A549 (cell line): ENCODE measurements at regions of chr5 and their contacts with region 1.

Region 1: DNA sequence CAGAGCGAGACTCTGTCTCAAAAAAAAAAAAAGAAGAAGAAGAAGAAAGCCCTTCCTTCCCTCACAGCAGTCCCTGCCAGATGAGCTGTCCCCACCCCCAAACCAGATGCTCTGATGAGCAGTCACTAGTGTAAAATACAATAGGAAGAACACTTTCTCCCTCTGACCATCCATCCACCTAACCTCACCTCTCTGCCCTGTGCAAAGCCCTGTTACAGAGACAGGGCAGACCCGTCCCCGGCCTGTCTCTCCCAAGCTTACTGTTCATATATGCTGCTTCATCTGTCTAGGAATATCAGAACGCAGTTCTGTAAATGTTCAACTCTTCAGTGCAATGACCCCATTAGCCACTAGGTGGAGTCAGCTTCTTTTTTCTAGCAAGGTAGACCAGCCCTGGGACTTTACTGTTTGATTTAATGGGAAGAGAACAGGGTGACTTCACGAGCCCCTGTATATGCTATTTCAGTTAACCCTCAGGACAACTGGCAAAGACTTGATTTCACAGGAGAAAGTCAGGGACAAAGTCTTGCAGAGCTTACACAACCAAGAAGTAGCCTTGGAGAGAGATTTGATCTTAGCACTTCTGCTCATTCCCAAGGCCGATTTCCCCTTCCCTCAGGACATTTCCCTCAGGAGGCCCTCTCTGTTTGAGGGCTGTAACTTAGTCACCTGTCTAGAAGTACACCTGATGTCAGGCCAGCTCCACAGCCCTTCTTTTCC is 14.9 kb upstream of the FGFR4 start:
- DNase-seq: peak; percentile 79 to 82
- ATAC-seq: peak; percentile 89 to 95
- H3K4me3 ChIP-seq: no peak overlapping the region
- H3K27ac ChIP-seq: no peak overlapping the region
- H3K4me1 ChIP-seq: peaks cover 7% of the 10 kb centered on the region; the same call in 1 of the 3 replicates
- CTCF ChIP-seq: peak; percentile 83
- EP300 ChIP-seq: no peak
- POLR2A ChIP-seq: no peak
- RAD21 ChIP-seq: peak; percentile 71 to 74

Region 2: GRCh38 chr5:177040814-177041420 is 30.9 kb before region 1 on chr5:
- CTCF ChIA-PET with region 1: interaction called, 21 read pairs
- POLR2A ChIA-PET with region 1: no interaction called
- DNase-seq: no peak
- ATAC-seq: no peak
- H3K4me3 ChIP-seq: no peak overlapping the region
- H3K27ac ChIP-seq: no peak overlapping the region
- H3K4me1 ChIP-seq: no peaks in the 10 kb centered on the region
- CTCF ChIP-seq: no peak
- EP300 ChIP-seq: no peak
- POLR2A ChIP-seq: no peak
- RAD21 ChIP-seq: no peak

Region 3: GRCh38 chr5:177086924-177087706 is 15.3 kb after region 1 on chr5:
- CTCF ChIA-PET with region 1: interaction called, 105 read pairs
- POLR2A ChIA-PET with region 1: no interaction called
- DNase-seq: peak; percentile 90 to 92
- ATAC-seq: peak; percentile 77 to 89
- H3K4me3 ChIP-seq: peak overlapping the region; percentile 51
- H3K27ac ChIP-seq: peak overlapping the region; percentile 84 to 91
- H3K4me1 ChIP-seq: peaks cover 30% of the 10 kb centered on the region
- CTCF ChIP-seq: peak; percentile 71
- EP300 ChIP-seq: no peak
- POLR2A ChIP-seq: peak; percentile 64
- RAD21 ChIP-seq: peak in 1 of 2 experiments; percentile 60; a peak in 3 of 5 replicates

Region 4: GRCh38 chr5:177107159-177107558 is 35.3 kb after region 1 on chr5:
- CTCF ChIA-PET with region 1: interaction called, 148 read pairs
- POLR2A ChIA-PET with region 1: no interaction called
- DNase-seq: no peak
- ATAC-seq: no peak
- H3K4me3 ChIP-seq: no peak overlapping the region
- H3K27ac ChIP-seq: no peak overlapping the region
- H3K4me1 ChIP-seq: peaks cover 4% of the 10 kb centered on the region; the same call in 1 of the 3 replicates
- CTCF ChIP-seq: no peak
- EP300 ChIP-seq: no peak
- POLR2A ChIP-seq: no peak
- RAD21 ChIP-seq: no peak

Region 5: DNA sequence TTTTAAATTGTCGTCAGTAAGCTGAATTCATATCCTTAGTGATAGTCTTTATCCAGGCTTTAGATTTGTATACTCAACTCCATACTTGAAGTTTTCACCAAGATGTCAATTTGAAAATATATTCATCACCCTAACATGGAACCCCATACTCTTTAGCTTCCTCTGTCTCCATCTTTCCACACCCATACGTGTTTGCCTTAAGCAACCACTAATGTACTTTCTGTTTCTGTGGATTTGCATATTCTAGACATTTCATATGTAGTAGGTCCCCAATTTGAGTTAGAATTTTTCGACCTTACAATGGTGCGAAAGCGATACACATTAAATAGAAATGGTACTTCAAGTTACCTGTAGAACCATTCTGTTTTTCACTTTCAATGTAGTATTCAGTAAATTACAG is 126.9 kb after region 1 on chr5:
- CTCF ChIA-PET with region 1: no interaction called
- POLR2A ChIA-PET with region 1: no interaction called
- DNase-seq: no peak
- ATAC-seq: no peak
- H3K4me3 ChIP-seq: no peak overlapping the region
- H3K27ac ChIP-seq: no peak overlapping the region
- H3K4me1 ChIP-seq: peaks cover 13% of the 10 kb centered on the region
- CTCF ChIP-seq: no peak
- EP300 ChIP-seq: no peak
- POLR2A ChIP-seq: no peak
- RAD21 ChIP-seq: no peak